Left colon (tissue), 2 donors: ENCODE measurements at regions of chr20 and their contacts with region 1.

Region 1: DNA sequence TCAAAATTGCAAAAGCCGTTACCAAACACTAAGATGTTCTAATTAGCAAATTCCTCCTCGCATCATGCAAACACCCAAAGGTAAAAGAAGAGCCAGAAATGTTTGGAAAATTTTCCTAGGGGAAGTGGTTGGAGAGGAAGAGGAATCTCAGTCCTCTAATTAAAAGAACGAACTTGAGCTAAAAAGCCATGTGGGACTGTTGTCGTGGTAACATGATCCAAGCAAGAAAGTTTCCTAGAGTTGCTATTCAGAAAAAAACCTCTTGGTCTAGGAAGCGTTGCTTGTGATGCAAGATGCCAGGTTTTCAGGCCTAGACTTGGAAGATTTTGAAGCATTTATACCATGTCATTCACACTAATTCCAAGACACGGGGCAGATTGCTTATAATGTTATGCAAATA is 106.8 kb upstream of the DOK5 start:
- DNase-seq: no peak
- ATAC-seq: no peak

Region 2: GRCh38 chr20:54219751-54220426 is 148.7 kb before region 1 on chr20:
- intact Hi-C with region 1: loop called in 1 of 2 experiments (anchors 10 kb)
- DNase-seq: no peak
- ATAC-seq: no peak